CD4-positive, alpha-beta memory T cell (primary cell): ENCODE measurements at regions of chr15 and their contacts with region 1.

Region 1: GRCh38 chr15:72117486-72118399 is at the start of gene MYO9A:
- DNase-seq: peak; percentile 97 to 98 (median 98)
- H3K4me3 ChIP-seq: peak within 1 kb of the TSS; percentile 89
- H3K4me3 Mint-ChIP-seq: peak within 1 kb of the TSS; percentile 93 to 100 (median 98)
- H3K27ac ChIP-seq: peak within 1 kb of the TSS; percentile 94
- H3K27ac Mint-ChIP-seq: peak within 1 kb of the TSS; percentile 96 to 99 (median 99)
- H3K4me1 ChIP-seq: peaks cover 23% of the 10 kb centered on the region
- H3K4me1 Mint-ChIP-seq: peaks cover 27 to 60% (median 41%) of the 10 kb centered on the region in 4 donors
- H3K27me3 ChIP-seq: no peaks in the 10 kb centered on the region
- H3K27me3 Mint-ChIP-seq: no peaks in the 10 kb centered on the region
- total RNA-seq, gene MYO9A: 37.9 to 44.0 TPM

Region 2: GRCh38 chr15:72237286-72238224 is 119.8 kb after region 1 on chr15:
- CTCF ChIA-PET with region 1: no interaction called
- POLR2A ChIA-PET with region 1: no interaction called
- intact Hi-C with region 1: no loop called
- DNase-seq: peak; percentile 13 to 72 (median 21)
- H3K4me3 ChIP-seq: no peak overlapping the region
- H3K4me3 Mint-ChIP-seq: peak overlapping the region in 2 of 8 donors; percentile 29 to 51
- H3K27ac ChIP-seq: no peak overlapping the region
- H3K27ac Mint-ChIP-seq: peak overlapping the region; percentile 23 to 81 (median 61)
- H3K4me1 ChIP-seq: peaks cover 24% of the 10 kb centered on the region
- H3K4me1 Mint-ChIP-seq: peaks cover 17 to 35% (median 22%) of the 10 kb centered on the region in 4 donors
- H3K27me3 ChIP-seq: no peaks in the 10 kb centered on the region
- H3K27me3 Mint-ChIP-seq: no peaks in the 10 kb centered on the region

Region 3: GRCh38 chr15:72482275-72482674 is 364.5 kb after region 1 on chr15:
- CTCF ChIA-PET with region 1: no interaction called
- POLR2A ChIA-PET with region 1: no interaction called
- intact Hi-C with region 1: loop called (anchors 5 kb)
- DNase-seq: no peak
- H3K4me3 ChIP-seq: no peak overlapping the region
- H3K4me3 Mint-ChIP-seq: peak overlapping the region in 5 of 8 donors; percentile 18 to 75 (median 29)
- H3K27ac ChIP-seq: no peak overlapping the region
- H3K27ac Mint-ChIP-seq: peak overlapping the region in 5 of 7 donors; percentile 0 to 56 (median 9)
- H3K4me1 ChIP-seq: peaks cover 81% of the 10 kb centered on the region
- H3K4me1 Mint-ChIP-seq: peaks cover 48 to 89% (median 66%) of the 10 kb centered on the region in 4 donors
- H3K27me3 ChIP-seq: no peaks in the 10 kb centered on the region
- H3K27me3 Mint-ChIP-seq: no peaks in the 10 kb centered on the region